Right ventricle myocardium superior (tissue), 1 donor: ENCODE measurements at regions of chr1 and their contacts with region 1.

Region 1: GRCh38 chr1:102191723-102192122 is 195.0 kb upstream of the OLFM3 start:
- DNase-seq: no peak
- ATAC-seq: peak; percentile 81

Region 2: DNA sequence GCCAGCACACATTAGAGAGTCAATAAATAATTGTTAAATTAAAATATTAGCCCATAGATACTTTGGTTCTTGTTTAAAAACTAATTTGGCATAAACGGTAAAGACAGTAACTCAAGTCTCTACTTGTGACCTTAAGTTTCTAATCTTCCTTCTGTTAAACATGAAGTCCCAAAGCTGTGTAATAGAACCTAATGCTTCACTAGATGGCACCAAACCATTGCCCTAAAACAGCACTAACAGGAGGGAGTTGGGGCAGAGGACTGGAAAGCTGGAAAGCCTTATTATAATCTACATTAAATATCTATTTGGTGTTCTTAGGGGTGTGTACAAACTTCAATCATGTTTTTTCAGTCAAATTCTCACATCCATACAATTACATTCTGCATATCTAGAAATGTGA is 371.7 kb before region 1 on chr1:
- intact Hi-C with region 1: loop called (anchors 2 kb)
- DNase-seq: no peak
- ATAC-seq: peak; percentile 60

Region 3: GRCh38 chr1:101960142-101960541 is 231.6 kb before region 1 on chr1:
- intact Hi-C with region 1: no loop called
- DNase-seq: no peak
- ATAC-seq: no peak